ENCODE measurements at regions of chr10 and their contacts with region 1.

Region 1: DNA sequence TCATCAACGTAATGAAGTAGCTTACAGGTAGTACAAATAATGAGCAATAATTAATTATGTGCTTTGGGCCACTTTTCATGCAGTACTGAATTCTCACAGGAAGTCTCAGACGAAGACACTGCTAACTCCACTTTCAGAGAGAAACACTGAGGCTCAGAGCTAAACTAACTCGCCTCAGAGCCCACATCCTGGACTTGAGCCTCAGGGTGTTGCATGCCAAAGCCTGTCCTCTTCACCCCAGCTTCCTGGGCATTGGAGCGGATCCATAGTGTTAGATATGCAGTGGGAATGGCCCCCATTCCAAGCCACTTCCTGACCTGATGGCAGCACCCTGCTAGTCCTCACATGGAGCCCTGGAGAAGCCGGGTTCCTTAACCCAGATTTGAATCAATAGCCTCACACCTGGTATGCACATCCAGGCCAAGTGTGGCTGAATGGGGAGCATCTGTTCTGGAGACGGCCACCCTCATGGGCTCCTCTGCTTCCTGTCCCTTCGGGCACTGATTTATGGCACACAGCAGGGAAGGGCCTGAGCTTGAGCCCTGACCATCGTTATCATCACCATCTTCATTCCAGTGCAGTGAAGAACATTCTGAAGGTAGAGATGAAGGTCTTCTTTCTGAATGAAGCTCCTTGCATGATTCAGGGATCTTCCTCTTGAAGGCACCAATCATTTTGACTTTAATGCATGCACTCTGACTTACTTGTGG is 265.1 kb upstream of the ZNF32 start:
- DNase-seq: no peak

Region 2: DNA sequence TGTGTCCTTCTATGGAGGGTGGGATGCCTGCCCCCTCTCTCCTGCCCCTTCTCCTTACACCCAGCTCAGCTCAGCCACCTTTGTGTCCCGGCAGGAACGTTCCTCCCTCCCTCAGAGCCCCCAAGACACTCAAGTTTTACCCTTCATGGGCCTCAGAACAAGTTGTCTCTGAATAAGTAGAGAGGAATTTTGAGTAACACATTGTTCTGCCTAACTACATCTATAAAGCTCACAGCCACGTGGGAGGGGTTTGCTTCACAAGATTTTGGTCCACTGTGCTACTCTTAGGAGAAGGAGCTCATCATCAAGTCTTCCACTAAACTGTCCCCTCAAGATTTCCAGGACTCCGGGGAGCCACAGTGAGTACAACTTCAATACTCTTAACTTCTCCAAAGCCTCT is 213.5 kb before region 1 on chr10:
- intact Hi-C with region 1: no loop called
- DNase-seq: no peak

Region 3: GRCh38 chr10:43863859-43864591 is 49.8 kb before region 1 on chr10:
- intact Hi-C with region 1: loop called (anchors 5 kb)
- DNase-seq: peak; percentile 78